GM12878 (cell line): ENCODE measurements at regions of chr3 and their contacts with region 1.

Region 1: GRCh38 chr3:49411968-49412631 is at the starts of genes RHOA and TCTA:
- DNase-seq: peak; percentile 99
- ATAC-seq: peak; percentile 88
- H3K4me3 ChIP-seq: peak within 1 kb of the TSS; percentile 93
- H3K27ac ChIP-seq: peak within 1 kb of the TSS; percentile 96
- H3K4me1 ChIP-seq: peaks cover 31% of the 10 kb centered on the region
- H3K27me3 ChIP-seq: no peaks in the 10 kb centered on the region
- CTCF ChIP-seq: no peak
- EP300 ChIP-seq: no peak
- POLR2A ChIP-seq: peak; percentile 96
- RAD21 ChIP-seq: no peak
- polyA plus RNA-seq, gene RHOA: 696 to 1,049 TPM
- polyA plus RNA-seq, gene TCTA: 6.5 to 7.1 TPM

Region 2: DNA sequence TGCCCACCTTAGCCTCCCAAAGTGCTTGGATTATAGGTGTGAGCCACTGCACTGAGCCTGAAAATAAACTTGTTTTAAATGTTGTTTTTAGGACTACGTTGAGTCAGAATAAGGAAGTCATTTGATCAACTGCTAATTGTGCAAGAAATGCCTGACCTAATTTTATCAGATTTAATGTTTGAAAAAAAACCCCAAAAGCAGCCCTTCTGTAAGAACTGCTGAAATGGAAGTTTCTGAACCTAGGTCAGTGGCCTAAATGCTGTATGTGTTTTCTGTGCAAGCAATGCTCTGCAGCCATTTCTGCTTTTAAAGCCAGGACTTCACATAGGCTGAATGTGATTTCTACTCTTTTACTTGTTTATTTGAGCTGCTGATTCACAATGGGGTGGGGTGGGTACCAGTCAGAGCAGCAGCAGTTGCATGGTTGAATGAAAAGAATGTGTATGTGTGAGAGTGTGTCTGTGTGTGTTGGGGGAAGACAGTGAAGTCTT is 60.5 kb before region 1 on chr3:
- CTCF ChIA-PET with region 1: no interaction called
- POLR2A ChIA-PET with region 1: interaction called, 17 read pairs
- RAD21 ChIA-PET with region 1: interaction called, 4 read pairs
- SMC1A ChIA-PET with region 1: interaction called, 3 read pairs
- in situ Hi-C with region 1: no loop called
- intact Hi-C with region 1: loop called (anchors 5 kb)
- DNase-seq: no peak
- ATAC-seq: peak; percentile 45
- H3K4me3 ChIP-seq: no peak overlapping the region
- H3K27ac ChIP-seq: peak overlapping the region; percentile 38; the same call in 1 of the 2 replicates
- H3K4me1 ChIP-seq: peaks cover 27% of the 10 kb centered on the region
- H3K27me3 ChIP-seq: no peaks in the 10 kb centered on the region
- CTCF ChIP-seq: no peak
- EP300 ChIP-seq: no peak
- POLR2A ChIP-seq: no peak
- RAD21 ChIP-seq: no peak

Region 3: GRCh38 chr3:49428697-49429100 is 16.6 kb after region 1 on chr3:
- CTCF ChIA-PET with region 1: interaction called, 8 read pairs
- POLR2A ChIA-PET with region 1: interaction called, 36 read pairs
- RAD21 ChIA-PET with region 1: interaction called, 16 read pairs
- SMC1A ChIA-PET with region 1: interaction called, 11 read pairs
- in situ Hi-C with region 1: no loop called
- intact Hi-C with region 1: loop called (anchors 1 kb)
- DNase-seq: no peak
- ATAC-seq: peak; percentile 10
- H3K4me3 ChIP-seq: peak overlapping the region; percentile 59
- H3K27ac ChIP-seq: peak overlapping the region; percentile 84
- H3K4me1 ChIP-seq: no peaks in the 10 kb centered on the region; the same call in 1 of the 2 replicates
- H3K27me3 ChIP-seq: no peaks in the 10 kb centered on the region
- CTCF ChIP-seq: no peak
- EP300 ChIP-seq: no peak
- POLR2A ChIP-seq: no peak
- RAD21 ChIP-seq: 0 out of 2 replicates have a peak, but pooled peaks have one; percentile 3